CD8-positive, alpha-beta T cell (primary cell): ENCODE measurements at regions of chr17 and their contacts with region 1.

Region 1: DNA sequence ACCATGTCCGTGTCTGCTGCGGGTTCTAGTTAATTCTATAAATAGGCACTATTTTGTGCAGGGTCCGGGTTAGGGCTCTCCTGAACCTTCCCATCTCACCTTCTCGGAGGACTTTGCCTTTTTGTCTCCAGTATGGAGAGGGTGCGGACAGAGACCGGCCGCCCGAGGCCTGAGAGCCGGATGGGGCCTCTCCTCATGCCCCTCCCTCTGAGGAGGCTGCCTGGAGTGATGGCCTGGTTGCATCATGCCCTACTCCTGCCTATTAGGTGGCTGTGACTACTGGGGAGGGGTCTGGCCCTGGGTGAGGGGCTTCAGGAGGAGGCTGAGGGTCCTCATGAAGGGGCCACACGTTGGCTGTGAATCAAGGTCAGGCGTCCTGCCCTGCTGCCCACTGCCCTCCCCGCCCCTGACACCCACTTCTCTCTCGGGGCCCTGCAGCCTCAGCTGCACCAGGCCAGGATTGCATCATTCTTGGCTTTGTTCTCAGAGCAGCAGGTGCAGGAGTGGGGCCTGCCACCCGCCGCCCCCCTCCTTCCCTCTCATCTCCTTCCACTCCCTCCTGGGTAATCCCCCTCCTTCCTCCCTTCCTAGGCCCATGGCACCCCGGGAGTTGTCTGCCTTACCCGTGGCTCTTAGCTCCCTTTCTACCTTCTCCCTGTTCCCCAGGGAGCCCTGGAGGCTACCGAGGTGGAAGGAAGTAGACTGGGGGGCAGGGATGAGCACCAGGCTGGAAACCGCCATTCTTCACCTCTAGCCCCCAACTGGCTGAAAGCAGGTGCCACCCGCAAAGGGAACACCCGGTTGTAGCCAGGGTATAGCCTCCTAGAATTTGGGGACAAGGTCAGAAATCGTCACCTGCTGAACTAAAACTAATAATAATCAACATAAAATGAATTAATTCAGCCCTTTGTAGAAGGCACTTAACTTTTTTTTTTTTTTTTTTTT is 12.7 kb upstream of the ARHGAP23 start:
- DNase-seq: no peak
- ATAC-seq: no peak
- H3K4me3 ChIP-seq: no peak overlapping the region
- H3K4me3 Mint-ChIP-seq: no peak overlapping the region
- H3K27ac ChIP-seq: no peak overlapping the region
- H3K27ac Mint-ChIP-seq: no peak overlapping the region
- H3K4me1 ChIP-seq: peaks cover 8% of the 10 kb centered on the region
- H3K4me1 Mint-ChIP-seq: peaks cover 3% of the 10 kb centered on the region
- H3K27me3 ChIP-seq: peaks cover 7 to 12% of the 10 kb centered on the region in 2 experiments
- H3K27me3 Mint-ChIP-seq: peaks cover 40% of the 10 kb centered on the region
- CTCF ChIP-seq: no peak

Region 2: DNA sequence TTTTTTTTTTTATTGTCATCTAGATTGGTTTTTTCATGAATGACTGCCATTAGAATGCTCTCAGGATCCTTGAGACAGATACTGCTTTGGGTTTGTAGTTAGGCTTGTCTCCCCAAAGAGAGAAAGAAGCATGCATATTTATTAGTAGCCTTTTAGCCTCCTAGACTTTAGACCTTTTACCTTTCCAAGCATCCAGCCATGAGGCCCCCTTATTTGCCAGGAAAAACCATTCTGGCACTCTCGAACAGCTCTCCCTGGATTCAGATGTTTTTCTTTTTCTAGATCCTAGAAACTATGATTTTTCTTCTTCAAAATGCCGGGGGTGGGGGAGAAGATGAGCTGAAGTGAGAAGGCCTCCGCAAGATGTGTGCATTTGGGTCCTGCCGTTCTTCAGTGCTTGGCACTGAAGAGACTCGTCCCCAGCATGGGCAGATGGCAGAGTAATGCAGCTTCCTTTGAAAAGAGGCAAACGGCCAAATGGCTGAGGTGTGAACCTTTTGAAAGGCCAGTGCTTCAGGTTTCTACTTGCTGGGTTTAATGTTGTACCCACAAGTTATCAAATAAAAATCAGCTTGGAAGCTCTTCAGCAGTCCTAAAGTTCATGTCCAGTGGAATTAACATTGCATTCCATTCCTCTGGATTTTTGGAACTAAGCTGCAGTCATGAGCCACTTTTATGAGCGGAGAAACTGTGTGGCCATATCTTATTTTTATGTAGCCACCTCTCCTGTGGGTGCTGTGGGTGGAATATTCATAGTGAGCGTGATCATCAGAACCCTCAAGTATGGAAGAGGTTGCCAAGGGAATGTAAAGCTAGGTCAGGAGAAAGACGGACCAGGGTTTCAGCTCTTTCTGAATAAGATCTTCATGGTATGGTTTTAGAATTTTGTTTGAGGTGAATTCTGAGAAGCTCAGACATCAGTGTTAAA is 56.7 kb before region 1 on chr17:
- CTCF ChIA-PET with region 1: interaction called, 320 read pairs
- POLR2A ChIA-PET with region 1: no interaction called
- intact Hi-C with region 1: no loop called
- DNase-seq: no peak
- ATAC-seq: no peak
- H3K4me3 ChIP-seq: no peak overlapping the region
- H3K4me3 Mint-ChIP-seq: no peak overlapping the region
- H3K27ac ChIP-seq: no peak overlapping the region
- H3K27ac Mint-ChIP-seq: peak overlapping the region; percentile 28
- H3K4me1 ChIP-seq: peaks cover 10% of the 10 kb centered on the region
- H3K4me1 Mint-ChIP-seq: peaks cover 53% of the 10 kb centered on the region
- H3K27me3 ChIP-seq: no peaks in the 10 kb centered on the region
- H3K27me3 Mint-ChIP-seq: no peaks in the 10 kb centered on the region
- CTCF ChIP-seq: no peak

Region 3: GRCh38 chr17:39643271-39643670 is 1227.7 kb after region 1 on chr17:
- CTCF ChIA-PET with region 1: no interaction called
- POLR2A ChIA-PET with region 1: no interaction called
- intact Hi-C with region 1: no loop called
- DNase-seq: no peak
- ATAC-seq: no peak
- H3K4me3 ChIP-seq: no peak overlapping the region
- H3K4me3 Mint-ChIP-seq: no peak overlapping the region
- H3K27ac ChIP-seq: no peak overlapping the region
- H3K27ac Mint-ChIP-seq: no peak overlapping the region
- H3K4me1 ChIP-seq: peaks cover 47% of the 10 kb centered on the region
- H3K4me1 Mint-ChIP-seq: peaks cover 71% of the 10 kb centered on the region
- H3K27me3 ChIP-seq: no peaks in the 10 kb centered on the region
- H3K27me3 Mint-ChIP-seq: no peaks in the 10 kb centered on the region
- CTCF ChIP-seq: no peak